Transverse colon (tissue), 4 donors: ENCODE measurements at regions of chr12 and their contacts with region 1.

Region 1: DNA sequence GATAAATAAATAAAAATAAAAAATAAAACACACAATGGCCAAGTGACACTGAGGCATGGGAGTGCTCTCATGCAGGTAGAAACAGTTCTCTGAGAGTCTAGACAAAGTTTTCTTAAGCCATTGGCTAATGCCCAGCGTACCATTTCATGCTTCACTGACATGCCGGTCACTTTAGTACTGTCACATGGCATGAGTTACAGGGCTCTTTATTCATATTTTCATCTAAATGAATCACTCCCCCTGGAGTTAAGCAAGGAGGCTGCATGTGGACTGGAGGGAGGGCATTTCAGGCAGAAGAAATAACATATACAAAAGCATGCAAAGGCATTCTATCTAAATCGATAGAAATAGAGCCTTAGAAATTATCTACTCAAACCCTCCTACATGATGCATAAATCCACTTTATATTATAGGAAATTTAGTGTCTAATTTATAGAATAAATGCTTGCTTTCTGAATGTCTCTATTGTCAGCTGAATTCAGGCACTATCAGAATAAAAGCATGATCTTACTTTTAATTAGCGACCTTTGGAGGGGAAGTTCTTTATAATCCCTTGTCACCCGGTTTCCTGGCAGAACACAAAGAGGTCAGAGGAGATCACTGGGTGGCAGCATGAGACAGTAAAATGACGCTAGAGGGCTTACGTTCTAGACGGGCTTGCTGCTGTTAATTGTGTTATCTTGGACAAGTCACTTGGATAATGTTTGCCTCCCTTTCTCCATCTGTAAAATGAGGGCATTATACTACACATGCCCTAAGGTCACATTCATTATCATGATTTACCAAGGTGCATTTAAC is 17.5 kb downstream of the DYRK4 start:
- DNase-seq: peak; percentile 25
- H3K4me3 ChIP-seq: no peak overlapping the region
- H3K27ac ChIP-seq: no peak overlapping the region
- H3K4me1 ChIP-seq: no peaks in the 10 kb centered on the region
- H3K27me3 ChIP-seq: peaks cover 3% of the 10 kb centered on the region
- CTCF ChIP-seq: peak; percentile 7 to 40 (median 21)
- EP300 ChIP-seq: no peak
- POLR2A ChIP-seq: no peak

Region 2: DNA sequence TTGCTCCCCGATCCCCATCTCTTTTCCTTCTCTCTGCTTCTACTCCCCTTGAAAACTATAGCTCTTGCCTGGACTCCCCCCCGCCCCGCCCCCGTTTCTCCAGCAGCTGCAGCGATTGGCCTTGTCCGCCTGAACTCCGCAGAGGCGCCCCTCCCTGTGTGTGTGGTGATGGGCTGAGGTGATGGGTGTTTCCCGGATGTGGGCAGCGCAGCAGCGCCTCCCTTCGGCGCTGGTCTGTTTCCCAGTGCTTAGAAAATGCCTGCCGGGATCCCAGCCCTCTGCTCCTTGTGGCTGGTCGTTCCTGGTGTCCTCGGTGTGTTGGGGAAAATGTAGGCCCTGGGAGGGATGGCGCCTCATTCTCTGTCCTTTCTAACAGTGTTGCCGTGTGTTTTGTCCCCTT is 184.0 kb after region 1 on chr12:
- in situ Hi-C with region 1: loop called in 3 of 4 experiments (anchors 25 kb)
- intact Hi-C with region 1: no loop called
- DNase-seq: peak; percentile 25
- H3K4me3 ChIP-seq: no peak overlapping the region
- H3K27ac ChIP-seq: no peak overlapping the region
- H3K4me1 ChIP-seq: no peaks in the 10 kb centered on the region
- H3K27me3 ChIP-seq: no peaks in the 10 kb centered on the region
- CTCF ChIP-seq: peak in 1 of 5 experiments; percentile 11
- EP300 ChIP-seq: no peak
- POLR2A ChIP-seq: no peak

Region 3: DNA sequence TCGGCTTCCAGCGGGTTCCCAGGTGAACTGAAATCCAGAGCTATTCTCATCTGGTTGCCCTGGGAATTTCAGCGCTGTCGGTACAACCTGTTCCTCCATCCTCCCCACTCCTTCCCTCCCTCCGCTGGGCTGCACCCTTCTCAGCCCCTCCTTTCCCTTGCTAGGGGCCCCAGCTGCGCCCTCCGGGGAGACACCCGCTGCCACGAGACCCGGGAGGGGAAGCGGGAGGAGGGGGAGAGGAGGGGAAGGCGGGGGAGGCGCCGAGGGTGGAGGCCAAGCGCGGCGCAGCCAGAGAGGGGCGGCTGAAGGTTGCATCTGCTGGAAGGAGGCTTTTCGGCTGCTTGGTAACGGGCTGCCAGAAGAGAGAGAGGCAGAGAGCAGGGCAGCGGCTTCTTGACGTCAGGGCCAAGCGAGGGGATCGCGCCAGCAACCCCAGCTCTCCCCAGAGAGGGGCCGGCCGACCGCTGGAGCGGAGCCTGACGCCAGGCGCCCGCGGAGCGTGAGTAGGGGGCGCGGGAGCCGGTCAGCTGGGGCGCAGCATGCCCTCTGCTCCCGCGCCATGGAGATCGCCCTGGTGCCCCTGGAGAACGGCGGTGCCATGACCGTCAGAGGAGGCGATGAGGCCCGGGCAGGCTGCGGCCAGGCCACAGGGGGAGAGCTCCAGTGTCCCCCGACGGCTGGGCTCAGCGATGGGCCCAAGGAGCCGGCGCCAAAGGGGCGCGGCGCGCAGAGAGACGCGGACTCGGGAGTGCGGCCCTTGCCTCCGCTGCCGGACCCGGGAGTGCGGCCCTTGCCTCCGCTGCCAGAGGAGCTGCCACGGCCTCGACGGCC is 464.3 kb after region 1 on chr12 and contains the start of gene KCNA5:
- in situ Hi-C with region 1: no loop called
- intact Hi-C with region 1: no loop called
- DNase-seq: no peak
- H3K4me3 ChIP-seq: peak within 1 kb of the TSS in 3 of 4 donors; percentile 15 to 30 (median 16)
- H3K27ac ChIP-seq: peak within 1 kb of the TSS in 1 of 4 donors; percentile 43
- H3K4me1 ChIP-seq: peaks cover 0 to 9% (median 0%) of the 10 kb centered on the region in 4 donors
- H3K27me3 ChIP-seq: peaks cover 67% of the 10 kb centered on the region
- CTCF ChIP-seq: no peak
- EP300 ChIP-seq: no peak
- POLR2A ChIP-seq: no peak
- total RNA-seq, gene KCNA5: 0.60 to 3.7 (median 2.0) TPM